PC-9 (cell line): ENCODE measurements at regions of chr15 and their contacts with region 1.

Region 1: DNA sequence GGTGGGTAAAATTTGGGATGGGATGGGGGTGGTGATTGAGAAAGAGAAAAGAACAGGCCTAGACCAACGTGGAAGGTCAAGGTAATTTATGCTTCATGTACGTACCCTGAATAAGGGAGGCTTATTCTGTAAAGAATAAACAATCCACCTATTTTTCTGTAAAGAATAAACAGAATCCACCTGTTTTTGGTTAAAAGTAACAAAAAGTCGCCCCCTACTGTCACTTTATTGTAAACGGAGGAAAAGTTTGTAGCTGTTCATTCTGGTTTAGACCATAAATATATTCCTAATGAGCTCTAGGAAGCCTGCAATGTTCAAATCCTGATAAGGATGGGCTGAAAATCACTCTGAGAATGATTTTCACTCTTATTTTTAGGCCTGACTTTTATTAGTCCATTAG is 23.5 kb upstream of the SQOR start:
- DNase-seq: peak in 1 of 2 experiments; percentile 35
- H3K4me3 ChIP-seq: no peak overlapping the region
- H3K27ac ChIP-seq: no peak overlapping the region
- H3K4me1 ChIP-seq: peaks cover 3% of the 10 kb centered on the region; the same call in 1 of the 2 replicates
- H3K27me3 ChIP-seq: no peaks in the 10 kb centered on the region
- CTCF ChIP-seq: peak; percentile 68

Region 2: GRCh38 chr15:45126535-45127158 is 484.7 kb before region 1 on chr15:
- CTCF ChIA-PET with region 1: no interaction called
- POLR2A ChIA-PET with region 1: no interaction called
- intact Hi-C with region 1: loop called (anchors 10 kb)
- DNase-seq: peak in 1 of 2 experiments; percentile 45
- H3K4me3 ChIP-seq: no peak overlapping the region
- H3K27ac ChIP-seq: no peak overlapping the region
- H3K4me1 ChIP-seq: peaks cover 11% of the 10 kb centered on the region; the same call in 1 of the 2 replicates
- H3K27me3 ChIP-seq: no peaks in the 10 kb centered on the region
- CTCF ChIP-seq: peak; percentile 78

Region 3: GRCh38 chr15:45205192-45205591 is 406.1 kb before region 1 on chr15:
- CTCF ChIA-PET with region 1: no interaction called
- POLR2A ChIA-PET with region 1: no interaction called
- intact Hi-C with region 1: loop called (anchors 5 kb)
- DNase-seq: peak in 1 of 2 experiments; percentile 60
- H3K4me3 ChIP-seq: no peak overlapping the region
- H3K27ac ChIP-seq: no peak overlapping the region
- H3K4me1 ChIP-seq: no peaks in the 10 kb centered on the region
- H3K27me3 ChIP-seq: no peaks in the 10 kb centered on the region
- CTCF ChIP-seq: peak; percentile 76

Region 4: GRCh38 chr15:45429974-45430792 is 181.1 kb before region 1 on chr15:
- CTCF ChIA-PET with region 1: interaction called, 3 read pairs
- POLR2A ChIA-PET with region 1: no interaction called
- intact Hi-C with region 1: loop called (anchors 1 kb)
- DNase-seq: peak in 1 of 2 experiments; percentile 74
- H3K4me3 ChIP-seq: peak overlapping the region; percentile 51; the same call in 1 of the 2 replicates
- H3K27ac ChIP-seq: no peak overlapping the region
- H3K4me1 ChIP-seq: peaks cover 11% of the 10 kb centered on the region
- H3K27me3 ChIP-seq: no peaks in the 10 kb centered on the region
- CTCF ChIP-seq: peak; percentile 99

Region 5: DNA sequence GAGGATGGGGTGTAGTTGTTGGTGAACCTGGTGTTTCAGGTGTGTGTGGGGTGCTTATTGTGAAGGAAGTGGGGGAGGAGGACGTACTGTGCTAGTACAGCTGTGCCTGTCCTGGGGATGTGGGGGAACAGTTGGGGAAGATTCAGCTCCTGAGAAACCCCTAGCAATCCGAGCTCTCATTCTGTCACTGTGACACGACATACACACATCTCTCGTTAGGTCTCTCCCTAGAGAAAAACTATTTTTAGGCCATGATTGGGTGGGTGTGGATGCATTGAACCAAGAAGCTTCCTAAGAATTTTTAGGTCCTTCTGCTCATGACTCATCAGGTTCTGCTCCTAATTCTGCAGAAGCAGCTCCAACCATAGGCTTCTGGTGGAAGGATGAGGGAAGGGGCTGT is 143.0 kb before region 1 on chr15:
- CTCF ChIA-PET with region 1: interaction called, 11 read pairs
- POLR2A ChIA-PET with region 1: no interaction called
- intact Hi-C with region 1: no loop called
- DNase-seq: no peak
- H3K4me3 ChIP-seq: no peak overlapping the region
- H3K27ac ChIP-seq: no peak overlapping the region
- H3K4me1 ChIP-seq: no peaks in the 10 kb centered on the region
- H3K27me3 ChIP-seq: no peaks in the 10 kb centered on the region
- CTCF ChIP-seq: no peak

Region 6: DNA sequence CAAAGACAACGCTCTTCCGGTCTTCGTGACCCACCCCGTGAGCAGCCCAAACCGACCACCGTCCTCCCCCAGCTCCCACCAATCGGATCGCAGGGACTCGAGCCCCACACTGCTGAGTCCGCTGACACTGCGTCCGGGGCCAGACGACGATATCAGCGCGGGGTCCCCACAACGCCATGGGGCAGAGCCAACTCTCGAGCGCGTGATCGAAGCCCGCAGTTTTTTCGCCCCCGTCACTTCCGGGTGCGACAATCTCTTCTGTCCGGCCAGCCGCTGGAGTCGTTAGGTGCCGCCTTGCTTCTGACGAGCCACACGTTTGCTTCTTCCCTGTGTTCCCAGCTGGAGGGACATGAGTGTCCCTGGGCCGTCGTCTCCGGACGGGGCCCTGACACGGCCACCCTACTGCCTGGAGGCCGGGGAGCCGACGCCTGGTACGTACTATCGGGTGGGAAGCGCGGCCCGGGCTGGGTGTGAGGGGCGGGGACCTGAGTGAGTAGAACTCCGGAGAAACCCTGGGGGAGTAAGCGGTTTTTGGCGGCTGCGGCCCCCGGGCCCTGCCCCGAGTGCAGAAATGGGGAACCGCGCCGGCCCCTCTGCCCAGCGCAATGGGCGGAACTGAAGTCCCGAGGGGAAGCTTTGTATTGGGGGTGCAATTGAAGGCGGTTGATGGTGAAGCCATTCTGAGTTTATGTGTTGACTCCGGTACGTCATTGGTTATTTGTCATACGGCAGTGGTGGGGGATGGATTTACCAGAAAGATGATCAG is 24.0 kb before region 1 on chr15 and contains the start of gene BLOC1S6:
- CTCF ChIA-PET with region 1: interaction called, 3 read pairs
- POLR2A ChIA-PET with region 1: no interaction called
- intact Hi-C with region 1: loop called (anchors 2 kb)
- DNase-seq: peak; percentile 78 to 80
- H3K4me3 ChIP-seq: peak within 1 kb of the TSS; percentile 96
- H3K27ac ChIP-seq: peak within 1 kb of the TSS; percentile 92
- H3K4me1 ChIP-seq: peaks cover 25% of the 10 kb centered on the region
- H3K27me3 ChIP-seq: no peaks in the 10 kb centered on the region
- CTCF ChIP-seq: no peak
- total RNA-seq, gene BLOC1S6: 22.7 and 29.4 TPM in 2 replicates

Region 7: GRCh38 chr15:45630917-45631691 is 19.8 kb after region 1 on chr15:
- CTCF ChIA-PET with region 1: no interaction called
- POLR2A ChIA-PET with region 1: no interaction called
- intact Hi-C with region 1: no loop called
- DNase-seq: peak; percentile 31 to 40
- H3K4me3 ChIP-seq: no peak overlapping the region
- H3K27ac ChIP-seq: no peak overlapping the region
- H3K4me1 ChIP-seq: peaks cover 10% of the 10 kb centered on the region; the same call in 1 of the 2 replicates
- H3K27me3 ChIP-seq: no peaks in the 10 kb centered on the region
- CTCF ChIP-seq: no peak